HepG2 (cell line): ENCODE measurements at regions of chr1 and their contacts with region 1.

Region 1: GRCh38 chr1:10575616-10576015 is 100.9 kb downstream of the PEX14 start:
- DNase-seq: no peak
- ATAC-seq: no peak
- H3K4me3 ChIP-seq: no peak overlapping the region
- H3K27ac ChIP-seq: no peak overlapping the region
- H3K4me1 ChIP-seq: peaks cover 11% of the 10 kb centered on the region
- H3K27me3 ChIP-seq: no peaks in the 10 kb centered on the region
- CTCF ChIP-seq: no peak
- EP300 ChIP-seq: no peak
- POLR2A ChIP-seq: no peak
- RAD21 ChIP-seq: no peak

Region 2: DNA sequence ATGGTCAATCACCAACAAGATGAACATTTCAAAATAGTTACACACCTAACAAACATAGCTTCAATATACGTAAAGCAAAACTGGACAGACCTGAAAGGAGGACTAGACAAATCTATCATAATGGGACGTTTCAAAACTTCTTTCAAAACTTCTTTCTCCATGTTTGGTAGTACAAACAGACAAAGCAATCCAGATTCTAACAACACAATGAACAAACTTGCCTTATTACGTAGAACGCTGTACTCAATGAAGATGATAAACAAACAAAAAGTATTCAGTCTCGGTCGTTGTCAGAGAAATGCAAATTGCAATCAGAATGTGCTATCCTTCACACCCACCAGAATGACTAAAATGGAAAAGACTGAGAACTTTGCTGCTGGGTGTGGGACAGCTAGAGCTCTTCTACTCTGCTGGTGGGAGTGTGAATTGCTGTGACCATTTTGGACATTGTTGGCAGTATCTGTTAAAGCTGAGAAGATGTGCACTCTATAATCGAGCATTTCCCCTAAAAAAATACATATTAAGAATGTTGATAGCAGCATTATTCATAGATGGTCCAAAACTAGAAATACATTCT is 10.4 kb after region 1 on chr1:
- CTCF ChIA-PET with region 1: no interaction called
- POLR2A ChIA-PET with region 1: no interaction called
- in situ Hi-C with region 1: no loop called
- intact Hi-C with region 1: loop called (anchors 1 kb)
- DNase-seq: no peak
- ATAC-seq: peak; percentile 59
- H3K4me3 ChIP-seq: no peak overlapping the region
- H3K27ac ChIP-seq: no peak overlapping the region
- H3K4me1 ChIP-seq: peaks cover 27% of the 10 kb centered on the region
- H3K27me3 ChIP-seq: no peaks in the 10 kb centered on the region
- CTCF ChIP-seq: no peak
- EP300 ChIP-seq: no peak
- POLR2A ChIP-seq: no peak
- RAD21 ChIP-seq: no peak

Region 3: DNA sequence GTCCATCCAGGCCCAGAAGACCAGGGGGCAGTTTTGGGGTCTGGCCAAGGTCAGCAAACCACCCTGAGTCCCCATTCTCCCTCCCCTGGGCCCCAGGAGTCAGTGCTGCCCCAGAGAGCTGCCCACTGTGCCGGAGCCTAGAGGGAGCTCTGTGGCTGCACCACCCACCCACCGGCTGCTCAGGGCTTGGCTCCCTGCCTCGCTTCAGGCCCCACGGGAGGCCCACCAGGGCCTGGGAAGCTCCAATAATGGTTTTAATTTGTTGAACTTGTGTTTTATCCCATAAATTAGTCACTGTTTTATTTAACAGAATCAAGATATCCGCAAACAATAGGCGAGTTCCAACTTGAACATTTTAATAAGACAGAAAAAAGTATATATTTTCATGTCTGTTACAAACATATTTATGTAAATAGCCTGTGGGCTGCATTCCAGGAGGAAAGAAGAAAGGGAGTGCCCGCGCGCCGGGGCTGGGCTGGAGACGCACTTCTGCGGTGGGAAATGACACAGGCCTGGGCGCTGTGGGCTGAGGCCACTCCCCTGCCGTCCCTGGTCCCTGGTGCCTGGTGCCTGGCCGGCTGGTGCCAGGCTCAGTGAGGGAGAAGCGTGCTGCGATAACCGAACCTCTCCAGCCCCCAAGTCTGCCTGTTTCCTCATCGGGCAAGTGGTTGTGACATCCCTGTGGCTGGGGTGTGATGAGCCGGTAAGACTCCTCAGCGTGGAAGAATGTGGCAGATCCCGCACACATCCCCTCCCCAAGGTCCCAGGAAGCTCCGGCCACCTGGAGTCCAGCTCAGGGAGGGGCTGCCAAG is 59.7 kb after region 1 on chr1:
- CTCF ChIA-PET with region 1: no interaction called
- POLR2A ChIA-PET with region 1: no interaction called
- in situ Hi-C with region 1: no loop called
- intact Hi-C with region 1: no loop called
- DNase-seq: no peak
- ATAC-seq: peak; percentile 55
- H3K4me3 ChIP-seq: no peak overlapping the region
- H3K27ac ChIP-seq: no peak overlapping the region
- H3K4me1 ChIP-seq: no peaks in the 10 kb centered on the region
- H3K27me3 ChIP-seq: no peaks in the 10 kb centered on the region; a peak in 1 of 5 replicates
- CTCF ChIP-seq: peak; percentile 26
- EP300 ChIP-seq: no peak
- POLR2A ChIP-seq: no peak
- RAD21 ChIP-seq: no peak

Region 4: DNA sequence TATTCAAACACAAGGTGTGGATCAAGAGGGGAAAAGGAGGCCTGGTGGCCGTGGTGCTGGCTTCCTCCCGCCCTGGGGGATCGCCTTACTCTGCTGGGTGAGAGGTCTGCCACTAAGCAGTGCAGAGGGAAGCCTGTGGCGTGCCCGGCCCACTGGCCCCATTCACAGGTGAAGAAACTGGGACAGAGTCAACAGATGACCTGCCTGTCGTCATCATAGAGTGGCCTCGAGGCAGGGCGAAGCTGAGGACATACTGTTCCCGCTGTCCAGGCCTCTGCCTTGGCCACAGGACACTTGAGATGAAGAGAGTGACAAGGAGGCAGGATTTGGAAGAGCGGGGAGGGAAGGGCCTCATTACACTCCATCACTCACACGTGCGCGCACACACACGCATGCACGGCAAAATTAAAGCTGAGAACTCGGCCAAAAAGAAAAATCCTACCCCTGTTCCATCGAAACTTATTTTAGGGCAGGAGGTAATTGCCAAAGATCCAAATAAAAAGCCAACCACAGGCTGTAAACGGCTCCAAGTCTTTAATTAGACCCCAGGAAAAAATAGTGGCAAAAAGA is 170.4 kb after region 1 on chr1:
- CTCF ChIA-PET with region 1: no interaction called
- POLR2A ChIA-PET with region 1: no interaction called
- in situ Hi-C with region 1: no loop called
- intact Hi-C with region 1: no loop called
- DNase-seq: no peak
- ATAC-seq: peak; percentile 56
- H3K4me3 ChIP-seq: no peak overlapping the region
- H3K27ac ChIP-seq: no peak overlapping the region
- H3K4me1 ChIP-seq: no peaks in the 10 kb centered on the region
- H3K27me3 ChIP-seq: peaks cover 3 to 15% of the 10 kb centered on the region in 2 experiments; a peak in 4 of 5 replicates
- CTCF ChIP-seq: no peak
- EP300 ChIP-seq: no peak
- POLR2A ChIP-seq: no peak
- RAD21 ChIP-seq: no peak